Transverse colon (tissue), 4 donors: ENCODE measurements at regions of chr18 and their contacts with region 1.

Region 1: DNA sequence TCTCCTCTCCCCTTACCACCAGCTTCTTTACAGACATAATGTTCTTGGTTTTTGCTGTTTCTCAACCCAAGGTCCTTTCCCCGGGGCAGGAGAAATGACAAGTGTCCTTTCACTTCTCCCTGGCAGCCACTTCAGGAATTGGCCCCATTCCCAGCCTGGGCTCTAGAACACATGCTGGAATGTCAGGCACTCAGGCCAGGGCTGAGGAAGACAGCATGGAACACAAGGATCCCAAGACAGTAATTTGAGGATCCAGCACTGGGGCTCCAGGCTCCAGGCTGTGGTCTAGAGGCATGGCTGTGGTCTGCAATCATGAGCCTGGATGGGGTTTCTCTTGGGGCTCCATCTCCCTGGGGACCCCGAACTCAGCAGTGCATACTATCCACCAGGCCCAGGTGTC is 201.4 kb downstream of the CELF4 start:
- DNase-seq: no peak
- H3K4me3 ChIP-seq: no peak overlapping the region
- H3K27ac ChIP-seq: no peak overlapping the region
- H3K4me1 ChIP-seq: no peaks in the 10 kb centered on the region
- H3K27me3 ChIP-seq: peaks cover 23% of the 10 kb centered on the region
- CTCF ChIP-seq: no peak
- EP300 ChIP-seq: no peak
- POLR2A ChIP-seq: no peak

Region 2: DNA sequence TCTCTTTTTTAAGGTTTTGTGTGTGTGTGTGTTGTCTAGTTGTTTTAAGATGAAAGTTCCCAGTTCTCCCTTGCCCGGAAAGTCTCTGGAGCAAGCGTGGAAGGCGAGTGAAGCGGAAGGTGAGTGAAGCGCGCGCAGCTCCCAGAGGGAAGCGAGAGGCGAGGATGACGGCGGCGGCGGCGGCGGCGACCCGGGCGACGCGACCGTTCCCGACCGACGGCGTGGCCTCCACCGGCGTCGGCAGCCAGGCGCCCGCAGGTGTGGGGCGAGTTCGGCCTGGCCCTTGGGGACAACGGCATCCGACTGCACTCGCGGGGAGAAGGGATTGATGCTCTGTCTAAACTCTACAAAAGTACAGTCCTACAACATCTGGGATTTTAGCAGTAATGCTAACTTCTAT is 120.5 kb before region 1 on chr18:
- in situ Hi-C with region 1: loop called in 1 of 4 experiments (anchors 25 kb)
- intact Hi-C with region 1: no loop called
- DNase-seq: no peak
- H3K4me3 ChIP-seq: no peak overlapping the region
- H3K27ac ChIP-seq: no peak overlapping the region
- H3K4me1 ChIP-seq: peaks cover 0 to 4% (median 0%) of the 10 kb centered on the region in 4 donors
- H3K27me3 ChIP-seq: peaks cover 41% of the 10 kb centered on the region
- CTCF ChIP-seq: no peak
- EP300 ChIP-seq: no peak
- POLR2A ChIP-seq: no peak

Region 3: DNA sequence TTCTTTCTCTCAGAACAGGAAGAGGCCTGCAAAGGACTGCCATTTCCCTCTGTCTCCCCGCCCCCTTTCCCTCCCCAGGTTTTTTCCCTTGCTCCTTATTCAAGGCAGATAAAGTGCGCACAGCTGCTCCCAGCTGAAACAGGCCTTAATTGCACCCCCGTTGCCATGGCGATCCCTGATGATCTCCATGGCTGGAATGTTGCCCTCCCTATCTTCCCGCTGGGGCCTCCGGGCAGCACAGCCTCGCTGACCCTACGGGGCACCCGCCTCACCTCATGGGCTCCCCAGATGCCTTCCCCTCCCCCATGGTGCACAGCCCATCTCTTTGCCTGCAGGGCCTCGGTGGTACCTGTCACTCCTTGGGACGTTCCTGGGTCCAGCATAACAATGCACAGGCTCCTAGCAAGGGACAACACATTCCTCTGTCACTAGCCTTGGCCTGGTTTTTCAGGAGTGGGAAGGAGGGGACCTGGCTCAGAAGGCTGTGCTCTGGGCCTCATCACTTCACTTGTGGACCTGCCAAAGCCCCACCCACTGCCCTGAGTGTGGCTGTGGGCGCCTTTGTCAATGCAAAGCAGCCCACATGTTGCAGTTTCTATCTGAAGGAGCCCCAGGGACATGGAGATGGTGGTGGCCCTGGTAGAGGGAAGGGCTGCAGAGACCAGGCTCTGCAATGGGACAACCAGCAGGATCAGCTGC is 86.3 kb after region 1 on chr18:
- in situ Hi-C with region 1: loop called in 1 of 4 experiments (anchors 25 kb)
- intact Hi-C with region 1: no loop called
- DNase-seq: no peak
- H3K4me3 ChIP-seq: no peak overlapping the region
- H3K27ac ChIP-seq: no peak overlapping the region
- H3K4me1 ChIP-seq: peaks cover 3 to 23% (median 5%) of the 10 kb centered on the region in 4 donors
- H3K27me3 ChIP-seq: no peaks in the 10 kb centered on the region
- CTCF ChIP-seq: no peak
- EP300 ChIP-seq: no peak
- POLR2A ChIP-seq: no peak

Region 4: DNA sequence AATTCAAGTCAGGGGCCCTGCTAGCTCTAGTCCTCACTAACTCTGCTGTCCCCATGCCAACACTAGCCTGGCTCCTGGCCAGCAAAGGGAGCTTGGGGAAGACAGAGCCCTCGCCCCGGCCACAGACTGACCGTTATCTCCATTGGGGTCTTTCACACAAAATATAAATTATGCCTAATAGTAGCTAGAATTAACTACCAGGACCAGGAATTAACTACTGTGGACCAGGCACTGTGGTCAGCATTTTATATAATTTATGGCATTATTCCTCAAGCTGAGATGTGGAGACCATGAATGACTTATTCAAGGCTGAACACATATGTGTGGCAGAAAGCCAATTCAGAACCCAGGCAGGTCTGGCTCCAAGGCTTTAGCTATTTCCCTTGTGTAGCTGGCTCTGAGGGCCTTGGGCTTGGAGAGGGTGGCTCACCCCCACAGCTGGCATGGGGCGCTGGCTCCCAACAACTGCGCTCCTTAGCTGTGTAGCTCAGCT is 152.2 kb after region 1 on chr18:
- in situ Hi-C with region 1: no loop called
- intact Hi-C with region 1: no loop called
- DNase-seq: no peak
- H3K4me3 ChIP-seq: no peak overlapping the region
- H3K27ac ChIP-seq: no peak overlapping the region
- H3K4me1 ChIP-seq: no peaks in the 10 kb centered on the region
- H3K27me3 ChIP-seq: no peaks in the 10 kb centered on the region
- CTCF ChIP-seq: no peak
- EP300 ChIP-seq: no peak
- POLR2A ChIP-seq: no peak